ENCODE measurements at regions of chr18 and their contacts with region 1.

Region 1: DNA sequence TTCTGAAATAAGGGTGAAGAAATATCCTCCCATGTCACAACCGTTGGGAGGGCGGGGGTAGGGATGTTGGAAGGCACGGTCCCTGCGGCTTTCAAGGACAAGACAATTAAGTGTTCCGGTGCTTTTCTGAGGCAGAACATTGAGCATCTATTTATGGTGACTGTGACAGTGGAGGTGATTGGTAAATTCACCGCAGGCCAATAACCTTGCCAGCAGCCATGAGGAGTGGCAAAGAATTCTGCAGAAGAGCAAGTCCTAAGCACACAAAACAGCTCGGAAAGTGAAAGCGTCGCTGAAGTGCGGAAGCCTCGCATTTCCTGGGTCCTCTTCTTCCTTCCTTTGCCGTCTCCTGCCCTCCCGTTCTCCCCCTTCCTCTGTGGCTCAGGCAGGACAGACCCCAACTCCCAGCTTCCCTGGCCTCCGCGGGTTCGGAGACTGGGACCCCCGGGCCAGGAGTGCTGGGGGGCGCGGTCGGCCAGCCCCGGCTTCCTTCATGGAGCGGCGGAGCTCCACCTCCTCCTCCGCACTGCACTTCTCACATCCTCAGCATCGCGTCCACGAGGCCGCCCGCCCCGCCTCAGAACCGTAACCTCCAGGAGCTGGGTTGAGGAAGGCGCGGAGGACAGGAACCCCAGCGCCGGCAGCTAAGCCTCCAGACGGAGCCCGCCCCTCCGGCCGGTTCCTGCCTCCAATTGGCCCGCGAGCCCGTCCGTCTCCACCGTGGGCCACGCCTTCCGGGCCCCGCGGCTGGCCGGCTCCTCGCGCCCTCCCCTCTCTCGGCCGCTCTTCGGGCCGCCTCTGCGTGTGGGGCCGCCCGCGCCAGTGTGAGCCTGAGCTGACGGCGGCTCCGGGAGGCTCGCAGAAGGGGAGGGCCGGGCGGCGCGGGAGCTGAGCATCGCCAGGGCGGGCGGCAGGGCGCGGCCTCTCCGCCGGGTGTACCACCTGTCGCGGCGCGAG is at the start of gene ME2:
- DNase-seq: peak; percentile 95
- H3K4me3 Mint-ChIP-seq: peak within 1 kb of the TSS; percentile 100
- H3K27ac Mint-ChIP-seq: peak within 1 kb of the TSS; percentile 82
- H3K4me1 Mint-ChIP-seq: peaks cover 10% of the 10 kb centered on the region
- H3K27me3 Mint-ChIP-seq: no peaks in the 10 kb centered on the region
- CTCF ChIP-seq: no peak
- total RNA-seq, gene ME2: 45.6 and 46.1 TPM in 2 replicates

Region 2: DNA sequence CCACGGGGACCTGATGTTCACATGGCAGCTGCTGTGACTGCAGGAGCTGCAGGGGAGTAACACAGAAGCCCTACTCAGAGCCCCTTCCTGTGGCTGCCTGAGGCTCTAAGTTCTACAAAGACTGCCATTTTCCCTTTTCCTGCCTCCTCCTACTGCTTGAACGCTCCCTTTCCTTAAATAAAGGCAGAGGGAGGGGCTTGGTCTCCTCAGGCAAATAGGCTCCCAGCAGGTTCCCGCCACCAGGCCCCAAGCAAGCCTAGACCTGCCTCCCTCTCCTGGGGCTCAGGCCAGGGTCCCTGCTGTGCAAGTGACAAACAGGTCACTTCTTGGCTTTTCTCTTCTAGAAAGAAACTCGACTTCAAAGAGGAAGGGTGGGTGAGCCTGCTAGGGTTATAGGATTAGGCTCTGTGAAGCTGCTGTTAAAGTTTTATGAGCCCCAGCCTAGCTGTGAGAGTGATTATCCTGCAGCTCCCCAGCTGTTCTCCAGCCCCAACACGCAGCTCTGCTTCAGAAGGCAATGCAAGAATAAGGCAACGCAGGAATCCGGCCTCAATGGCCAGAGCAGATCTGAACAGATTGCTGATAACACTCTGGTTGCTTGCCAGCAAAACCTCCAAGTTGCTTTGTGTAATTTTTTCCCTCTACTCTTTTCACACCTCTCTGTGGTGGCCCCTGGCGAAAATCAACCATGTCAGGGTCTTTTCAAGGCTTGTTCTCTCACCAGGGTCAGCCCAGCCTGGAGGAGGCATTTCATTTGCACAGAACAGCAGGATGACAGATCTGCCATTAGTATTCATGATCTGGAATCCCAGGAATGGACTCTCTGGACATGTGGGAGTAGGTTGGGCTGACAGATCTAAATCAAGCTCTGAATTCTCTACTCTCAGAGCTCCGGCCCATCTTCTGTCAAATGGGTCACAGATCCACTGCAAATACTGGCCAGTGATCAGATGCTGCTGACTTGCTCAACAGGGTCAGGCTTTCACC is 130.1 kb before region 1 on chr18:
- CTCF ChIA-PET with region 1: no interaction called
- intact Hi-C with region 1: no loop called
- DNase-seq: no peak
- H3K4me3 Mint-ChIP-seq: no peak overlapping the region
- H3K27ac Mint-ChIP-seq: no peak overlapping the region
- H3K4me1 Mint-ChIP-seq: no peaks in the 10 kb centered on the region
- H3K27me3 Mint-ChIP-seq: peaks cover 98% of the 10 kb centered on the region
- CTCF ChIP-seq: no peak

Region 3: GRCh38 chr18:50973367-50974126 is 94.9 kb after region 1 on chr18:
- CTCF ChIA-PET with region 1: no interaction called
- intact Hi-C with region 1: loop called (anchors 5 kb)
- DNase-seq: peak; percentile 39
- H3K4me3 Mint-ChIP-seq: no peak overlapping the region
- H3K27ac Mint-ChIP-seq: no peak overlapping the region
- H3K4me1 Mint-ChIP-seq: peaks cover 42% of the 10 kb centered on the region
- H3K27me3 Mint-ChIP-seq: no peaks in the 10 kb centered on the region
- CTCF ChIP-seq: no peak

Region 4: GRCh38 chr18:51290860-51291259 is 412.2 kb after region 1 on chr18:
- CTCF ChIA-PET with region 1: no interaction called
- intact Hi-C with region 1: no loop called
- DNase-seq: no peak
- H3K4me3 Mint-ChIP-seq: no peak overlapping the region
- H3K27ac Mint-ChIP-seq: no peak overlapping the region
- H3K4me1 Mint-ChIP-seq: no peaks in the 10 kb centered on the region
- H3K27me3 Mint-ChIP-seq: no peaks in the 10 kb centered on the region
- CTCF ChIP-seq: no peak

Measured in Calu3 (cell line).